Endothelial cell of umbilical vein (primary cell): ENCODE measurements at regions of chr2 and their contacts with region 1.

Region 1: DNA sequence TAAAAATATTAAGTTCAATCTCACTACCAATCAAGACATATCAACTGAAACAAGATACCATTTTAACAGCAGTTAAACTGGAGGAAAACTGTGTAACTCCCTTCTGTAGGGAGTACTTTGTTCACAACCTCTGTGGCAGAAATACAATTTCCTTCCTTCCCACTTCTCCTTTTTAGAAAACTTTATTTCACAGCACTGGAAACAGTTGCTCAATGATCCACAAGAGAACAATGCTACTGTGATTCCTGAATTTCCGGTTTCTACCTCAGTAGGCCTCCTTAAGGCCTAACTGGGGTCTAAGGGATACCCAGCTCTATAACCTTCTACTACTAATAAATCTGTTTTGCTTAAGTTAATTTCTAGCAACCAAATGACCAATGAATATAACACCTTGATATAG is 14.1 kb downstream of the TLK1 start:
- DNase-seq: peak; percentile 83
- H3K4me3 ChIP-seq: peak overlapping the region in 1 of 3 experiments; percentile 26
- H3K27ac ChIP-seq: peak overlapping the region; percentile 71
- H3K4me1 ChIP-seq: peaks cover 29% of the 10 kb centered on the region
- H3K27me3 ChIP-seq: no peaks in the 10 kb centered on the region
- CTCF ChIP-seq: no peak
- POLR2A ChIP-seq: no peak

Region 2: DNA sequence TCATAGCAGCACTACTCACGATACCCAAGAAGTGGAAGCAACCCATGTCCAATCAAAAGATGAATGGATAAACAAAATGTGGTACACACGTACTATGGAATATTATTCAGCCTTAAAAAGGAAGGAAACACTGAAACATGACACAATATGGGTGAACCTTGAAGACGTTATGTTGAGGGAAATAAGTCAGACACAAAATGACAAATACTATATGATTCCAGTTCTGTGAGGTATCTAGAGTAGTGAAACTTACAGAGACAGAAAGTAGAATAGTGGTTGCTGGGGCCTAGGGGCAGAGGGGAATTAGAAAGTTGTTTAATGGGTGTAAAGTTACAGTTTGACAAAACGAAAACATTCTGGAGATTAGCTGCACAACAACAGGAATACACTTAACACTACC is 10.6 kb before region 1 on chr2:
- CTCF ChIA-PET with region 1: interaction called, 14 read pairs
- POLR2A ChIA-PET with region 1: no interaction called
- dilution Hi-C with region 1: no loop called
- intact Hi-C with region 1: no loop called
- DNase-seq: no peak
- H3K4me3 ChIP-seq: no peak overlapping the region
- H3K27ac ChIP-seq: no peak overlapping the region
- H3K4me1 ChIP-seq: no peaks in the 10 kb centered on the region
- H3K27me3 ChIP-seq: no peaks in the 10 kb centered on the region
- CTCF ChIP-seq: no peak
- POLR2A ChIP-seq: no peak

Region 3: DNA sequence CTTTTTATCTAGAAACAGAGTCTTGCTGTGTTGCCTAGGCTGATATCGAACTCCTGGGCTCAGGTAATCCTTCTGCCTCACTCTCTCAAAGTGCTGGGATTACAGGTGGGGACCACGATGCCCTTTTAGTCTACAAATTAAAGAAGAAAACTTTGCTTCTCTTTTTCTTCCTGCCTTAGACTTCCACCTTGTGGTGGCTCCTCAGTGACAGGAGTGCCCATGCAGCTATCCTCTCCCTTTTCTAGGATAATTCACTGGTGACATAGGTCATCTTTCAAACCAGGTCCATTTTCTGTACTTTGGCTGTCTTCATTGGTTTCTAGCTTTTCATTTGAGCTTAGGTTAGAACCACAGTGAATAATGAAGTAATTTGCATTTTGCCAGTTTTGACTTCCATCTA is 301.0 kb after region 1 on chr2:
- CTCF ChIA-PET with region 1: no interaction called
- POLR2A ChIA-PET with region 1: no interaction called
- dilution Hi-C with region 1: no loop called
- intact Hi-C with region 1: no loop called
- DNase-seq: no peak
- H3K4me3 ChIP-seq: no peak overlapping the region
- H3K27ac ChIP-seq: no peak overlapping the region
- H3K4me1 ChIP-seq: no peaks in the 10 kb centered on the region
- H3K27me3 ChIP-seq: no peaks in the 10 kb centered on the region
- CTCF ChIP-seq: no peak
- POLR2A ChIP-seq: no peak